Left cardiac atrium (tissue), 4 donors: ENCODE measurements at regions of chr9 and their contacts with region 1.

Region 1: GRCh38 chr9:125726456-125727132 is 19.6 kb upstream of the MAPKAP1 start:
- DNase-seq: no peak
- ATAC-seq: no peak

Region 2: DNA sequence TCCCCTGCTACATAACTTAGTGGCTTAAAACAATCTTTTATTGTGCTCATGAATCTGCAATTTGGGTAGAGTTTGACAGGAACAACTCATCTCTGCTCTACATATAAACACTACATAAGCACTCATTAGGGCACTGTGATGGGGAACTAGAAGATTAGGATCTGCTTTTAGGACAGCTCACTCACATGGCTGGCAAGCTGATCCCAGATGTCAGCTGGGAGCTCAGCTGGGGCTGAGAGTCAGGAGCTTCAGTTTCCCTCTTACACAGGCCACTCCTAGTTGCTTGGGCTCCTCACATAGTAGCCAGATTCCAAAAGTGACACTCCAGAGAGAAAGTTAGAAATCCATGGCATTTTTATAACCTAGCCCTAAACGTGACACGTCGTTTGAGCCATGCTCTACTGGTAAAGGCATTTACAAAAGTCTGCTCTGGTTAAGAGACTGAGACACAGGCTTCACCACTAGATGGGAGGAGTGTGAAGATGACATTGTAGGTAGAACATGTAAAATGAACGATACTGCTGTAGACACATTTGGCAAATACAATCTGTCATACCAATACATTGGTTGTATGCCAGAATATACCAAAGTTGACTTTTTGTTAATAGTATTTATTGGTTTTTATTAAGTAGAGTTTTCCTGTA is 606.8 kb before region 1 on chr9:
- intact Hi-C with region 1: no loop called
- DNase-seq: no peak
- ATAC-seq: no peak

Region 3: DNA sequence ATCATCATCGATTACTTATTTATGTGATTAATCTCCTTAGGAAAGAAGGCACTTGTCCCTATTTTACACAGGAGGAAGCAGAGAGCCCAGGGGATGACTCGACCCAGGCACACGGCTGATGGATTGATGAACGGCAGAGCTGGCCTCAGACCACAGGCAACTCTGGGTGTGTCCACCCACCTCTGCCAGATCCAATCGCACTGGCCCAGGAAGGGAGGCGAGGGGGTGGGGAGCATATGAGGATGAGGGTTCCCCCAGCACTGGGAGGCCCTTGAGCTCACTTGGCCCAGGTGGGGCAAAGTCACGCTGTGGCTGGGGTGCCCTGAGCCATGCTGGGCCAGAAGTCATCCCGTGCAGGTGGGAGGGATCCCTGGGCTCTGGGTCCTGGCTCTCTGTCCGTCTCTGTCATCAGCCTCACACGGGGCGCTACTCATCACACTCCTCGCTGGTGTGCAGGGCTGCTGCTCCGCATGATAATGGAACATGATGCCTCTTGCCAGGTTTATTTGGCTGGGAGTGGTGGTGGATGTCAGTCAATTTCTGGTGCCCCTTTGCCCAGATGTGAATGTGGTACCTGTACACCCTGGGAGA is 304.9 kb before region 1 on chr9:
- intact Hi-C with region 1: loop called in 1 of 2 experiments (anchors 5 kb)
- DNase-seq: peak; percentile 11
- ATAC-seq: no peak